Posterior vena cava (tissue), 2 donors: ENCODE measurements at regions of chr13 and their contacts with region 1.

Region 1: DNA sequence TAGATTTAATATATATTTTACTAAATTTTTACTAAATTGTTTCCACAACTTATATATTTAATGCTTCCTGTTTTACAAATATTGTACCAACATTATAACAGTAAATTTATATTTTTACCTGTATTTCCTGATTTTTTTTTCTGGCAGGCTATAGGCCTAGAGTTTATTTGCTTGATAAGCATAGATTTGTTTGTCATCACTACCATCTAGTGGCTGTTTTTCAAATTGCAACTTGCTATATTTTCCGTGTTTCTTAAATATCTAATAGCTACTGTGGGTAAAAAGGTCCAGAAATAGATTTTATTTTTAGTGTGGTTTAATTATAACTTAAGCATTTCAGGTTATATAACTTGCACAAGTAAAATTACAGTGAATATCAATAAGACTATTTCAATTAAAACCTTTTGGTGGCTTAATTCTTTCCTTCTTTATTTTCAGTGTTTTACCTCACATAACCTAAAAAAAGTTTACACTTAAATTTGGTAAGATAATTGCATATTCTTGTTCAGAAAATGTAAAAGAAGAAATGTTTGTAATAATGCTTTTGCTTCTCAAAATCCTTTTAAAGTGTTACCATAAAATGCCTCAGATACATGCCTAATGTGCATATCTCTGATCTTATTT is 60.6 kb downstream of the NDFIP2 start:
- DNase-seq: no peak

Region 2: DNA sequence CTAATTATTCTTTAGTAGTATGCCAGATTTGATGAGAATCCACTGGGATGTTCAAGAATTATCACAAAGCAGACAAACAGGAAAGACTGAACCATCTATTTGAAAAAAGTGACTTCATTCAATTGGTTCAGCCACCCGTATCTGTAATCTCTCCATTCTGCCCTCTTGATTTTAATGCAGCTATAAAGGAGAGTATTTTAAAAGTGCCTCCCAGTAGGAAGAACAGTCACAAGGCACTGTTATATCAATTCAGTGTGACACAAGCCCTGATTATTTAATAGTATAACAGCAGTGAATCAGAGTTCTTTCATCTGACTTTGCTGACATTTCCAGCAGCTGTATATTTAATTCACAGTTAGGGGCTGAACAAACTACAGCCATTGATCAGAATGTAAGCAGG is 1921.4 kb before region 1 on chr13:
- intact Hi-C with region 1: no loop called
- DNase-seq: no peak

Region 3: DNA sequence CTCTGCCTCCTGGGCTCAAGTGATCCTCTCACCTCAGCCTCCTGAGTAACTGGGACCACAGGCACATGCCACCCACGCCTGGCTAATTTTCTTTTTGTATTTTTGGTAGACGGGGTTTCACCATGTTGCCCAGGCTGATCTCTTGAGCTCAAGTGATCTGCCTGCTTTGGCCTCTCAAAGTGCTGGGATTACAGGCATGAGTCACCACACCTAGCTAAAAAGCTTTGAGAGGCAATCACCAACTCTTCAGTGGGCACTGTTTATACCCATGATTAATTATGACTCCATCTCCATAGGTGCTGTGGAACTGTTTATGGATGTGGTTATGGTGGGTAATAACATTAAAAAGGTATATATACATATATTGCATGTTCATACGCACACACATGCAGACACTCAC is 128.0 kb before region 1 on chr13:
- intact Hi-C with region 1: loop called in 1 of 2 experiments (anchors 5 kb)
- DNase-seq: no peak

Region 4: GRCh38 chr13:79423801-79424642 is 117.5 kb before region 1 on chr13:
- intact Hi-C with region 1: loop called in 1 of 2 experiments (anchors 5 kb)
- DNase-seq: no peak

Region 5: GRCh38 chr13:79432992-79433391 is 108.5 kb before region 1 on chr13:
- intact Hi-C with region 1: loop called in 1 of 2 experiments (anchors 2 kb)
- DNase-seq: no peak